ENCODE measurements at regions of chr16 and their contacts with region 1.

Region 1: GRCh38 chr16:31179747-31180459 is at the start of gene FUS:
- DNase-seq: peak; percentile 99
- H3K4me3 ChIP-seq: peak within 1 kb of the TSS; percentile 77 to 99
- H3K27ac ChIP-seq: peak within 1 kb of the TSS; percentile 95
- H3K4me1 ChIP-seq: peaks cover 9 to 15% of the 10 kb centered on the region in 2 experiments; a peak in 2 of 4 replicates
- H3K27me3 ChIP-seq: no peaks in the 10 kb centered on the region
- CTCF ChIP-seq: no peak
- EP300 ChIP-seq: peak in 1 of 2 experiments; percentile 53; a peak in 1 of 4 replicates
- RAD21 ChIP-seq: no peak
- polyA plus RNA-seq, gene FUS: 298 and 429 TPM in 2 replicates

Region 2: GRCh38 chr16:31073968-31074813 is 105.7 kb before region 1 on chr16 and contains the starts of genes ZNF646 and ZNF668:
- CTCF ChIA-PET with region 1: no interaction called
- POLR2A ChIA-PET with region 1: interaction called, 15 read pairs
- DNase-seq: peak; percentile 92
- H3K4me3 ChIP-seq: peak within 1 kb of the TSS; percentile 90 to 95
- H3K27ac ChIP-seq: peak within 1 kb of the TSS; percentile 94 to 95
- H3K4me1 ChIP-seq: peaks cover 5 to 14% of the 10 kb centered on the region in 2 experiments; a peak in 3 of 4 replicates
- H3K27me3 ChIP-seq: no peaks in the 10 kb centered on the region
- CTCF ChIP-seq: no peak; the same call in 1 of the 2 replicates
- EP300 ChIP-seq: peak in 1 of 2 experiments; percentile 13; a peak in 1 of 4 replicates
- RAD21 ChIP-seq: no peak; the same call in 1 of the 2 replicates
- polyA plus RNA-seq, gene ZNF646: 2.7 and 3.4 TPM in 2 replicates
- polyA plus RNA-seq, gene ZNF668: 12.4 and 13.6 TPM in 2 replicates

Measured in SK-N-SH (cell line).